ENCODE measurements at regions of chr1 and their contacts with region 1.

Region 1: DNA sequence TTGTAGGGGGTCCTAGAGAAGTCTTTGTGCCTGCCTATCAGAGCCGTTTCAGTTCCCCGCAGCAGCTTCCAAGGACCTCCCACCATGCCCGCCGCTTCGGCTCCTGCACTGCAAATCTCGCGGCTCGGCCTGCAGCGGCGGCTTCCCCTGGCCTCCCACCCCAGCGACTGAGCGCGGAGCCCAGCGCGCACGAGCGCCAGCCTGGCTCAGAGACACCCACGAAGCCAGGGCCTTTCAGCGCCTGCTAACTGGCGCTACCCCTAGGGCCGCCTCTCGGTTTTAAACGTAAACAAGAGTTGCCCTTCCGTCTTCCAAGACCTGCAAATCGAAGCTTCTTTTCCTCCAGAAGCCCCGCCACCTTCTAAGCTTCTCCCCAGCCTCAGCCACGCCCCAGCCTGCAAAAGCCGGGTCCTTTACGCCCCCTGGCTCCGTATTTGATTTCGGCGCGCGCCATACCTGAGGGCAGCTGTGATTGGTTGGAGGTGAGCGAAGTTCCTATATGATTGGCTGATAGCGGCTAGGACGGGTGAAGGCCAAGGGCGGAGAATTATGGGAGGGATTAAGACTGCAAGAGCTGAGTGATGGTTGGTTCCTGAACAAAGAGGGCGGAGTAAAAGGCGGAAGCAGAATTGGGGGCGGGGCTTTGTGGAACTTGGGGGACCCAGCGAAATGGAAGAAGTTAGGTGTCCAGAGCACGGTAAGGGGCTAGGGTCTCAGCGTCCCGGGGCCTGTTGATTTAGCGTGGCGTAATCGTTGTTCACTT is at the start of gene TTF2:
- DNase-seq: peak; percentile 95 to 98 (median 96)
- H3K4me3 ChIP-seq: peak within 1 kb of the TSS; percentile 67 to 85 (median 73)
- H3K4me3 Mint-ChIP-seq: no peak within 1 kb of the TSS
- H3K27ac ChIP-seq: peak within 1 kb of the TSS; percentile 22 to 85
- H3K27ac Mint-ChIP-seq: peak within 1 kb of the TSS in 3 of 7 donors; percentile 63 to 77 (median 75)
- H3K4me1 ChIP-seq: peaks cover 16 to 25% of the 10 kb centered on the region in 2 donors
- H3K4me1 Mint-ChIP-seq: peaks cover 22% of the 10 kb centered on the region
- H3K27me3 ChIP-seq: no peaks in the 10 kb centered on the region
- H3K27me3 Mint-ChIP-seq: no peaks in the 10 kb centered on the region
- CTCF ChIP-seq: no peak
- polyA plus RNA-seq, gene TTF2: 5.6 to 12.9 (median 8.0) TPM

Region 2: GRCh38 chr1:116724765-116725375 is 335.0 kb before region 1 on chr1:
- intact Hi-C with region 1: loop called in 1 of 2 experiments (anchors 5 kb)
- DNase-seq: peak; percentile 25 to 61 (median 54)
- H3K4me3 ChIP-seq: no peak overlapping the region
- H3K4me3 Mint-ChIP-seq: no peak overlapping the region
- H3K27ac ChIP-seq: no peak overlapping the region
- H3K27ac Mint-ChIP-seq: no peak overlapping the region
- H3K4me1 ChIP-seq: peaks cover 15 to 17% of the 10 kb centered on the region in 2 donors
- H3K4me1 Mint-ChIP-seq: peaks cover 15% of the 10 kb centered on the region
- H3K27me3 ChIP-seq: no peaks in the 10 kb centered on the region
- H3K27me3 Mint-ChIP-seq: peaks cover 0 to 8% (median 0%) of the 10 kb centered on the region in 3 donors
- CTCF ChIP-seq: peak; percentile 91

Region 3: GRCh38 chr1:116737020-116737854 is 322.6 kb before region 1 on chr1:
- intact Hi-C with region 1: loop called (anchors 5 kb)
- DNase-seq: peak; percentile 47 to 57 (median 53)
- H3K4me3 ChIP-seq: no peak overlapping the region
- H3K4me3 Mint-ChIP-seq: no peak overlapping the region
- H3K27ac ChIP-seq: no peak overlapping the region
- H3K27ac Mint-ChIP-seq: peak overlapping the region in 1 of 7 donors; percentile 50
- H3K4me1 ChIP-seq: peaks cover 34 to 39% of the 10 kb centered on the region in 2 donors
- H3K4me1 Mint-ChIP-seq: peaks cover 42% of the 10 kb centered on the region
- H3K27me3 ChIP-seq: no peaks in the 10 kb centered on the region
- H3K27me3 Mint-ChIP-seq: peaks cover 0 to 4% (median 1%) of the 10 kb centered on the region in 3 donors
- CTCF ChIP-seq: peak; percentile 83

Region 4: DNA sequence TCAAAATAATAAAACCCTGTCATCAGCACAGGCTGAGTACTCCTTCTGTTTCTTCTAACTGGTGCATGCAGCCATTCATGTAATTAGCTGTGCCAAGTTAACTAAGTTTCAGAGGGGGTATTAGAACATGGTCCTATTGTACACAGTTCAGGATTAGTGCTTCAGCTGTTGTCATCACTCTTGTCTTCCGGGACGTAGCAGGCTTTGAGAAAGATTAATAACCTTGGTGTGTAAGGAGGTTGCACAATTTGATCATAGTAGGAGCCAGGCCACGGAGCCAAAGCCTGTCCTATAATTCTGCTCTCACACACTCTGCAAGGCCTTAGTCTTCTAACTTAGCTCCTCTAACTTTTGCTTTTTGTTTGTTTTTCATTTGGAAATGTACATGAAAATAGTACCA is 105.4 kb before region 1 on chr1:
- intact Hi-C with region 1: no loop called
- DNase-seq: no peak
- H3K4me3 ChIP-seq: no peak overlapping the region
- H3K4me3 Mint-ChIP-seq: no peak overlapping the region
- H3K27ac ChIP-seq: no peak overlapping the region
- H3K27ac Mint-ChIP-seq: no peak overlapping the region
- H3K4me1 ChIP-seq: no peaks in the 10 kb centered on the region
- H3K4me1 Mint-ChIP-seq: peaks cover 2% of the 10 kb centered on the region
- H3K27me3 ChIP-seq: no peaks in the 10 kb centered on the region
- H3K27me3 Mint-ChIP-seq: peaks cover 0 to 2% (median 2%) of the 10 kb centered on the region in 3 donors
- CTCF ChIP-seq: no peak

Region 5: GRCh38 chr1:116990612-116991151 is 69.2 kb before region 1 on chr1:
- intact Hi-C with region 1: loop called in 1 of 2 experiments (anchors 10 kb)
- DNase-seq: peak; percentile 87 to 97 (median 94)
- H3K4me3 ChIP-seq: peak overlapping the region in 1 of 3 experiments; percentile 26
- H3K4me3 Mint-ChIP-seq: peak overlapping the region; percentile 18 to 68
- H3K27ac ChIP-seq: peak overlapping the region; percentile 96 to 97
- H3K27ac Mint-ChIP-seq: peak overlapping the region; percentile 92 to 99 (median 97)
- H3K4me1 ChIP-seq: peaks cover 72 to 75% of the 10 kb centered on the region in 2 donors
- H3K4me1 Mint-ChIP-seq: peaks cover 89% of the 10 kb centered on the region
- H3K27me3 ChIP-seq: no peaks in the 10 kb centered on the region
- H3K27me3 Mint-ChIP-seq: peaks cover 0 to 8% (median 1%) of the 10 kb centered on the region in 3 donors
- CTCF ChIP-seq: no peak

Region 6: GRCh38 chr1:117121776-117122697 is 62.2 kb after region 1 on chr1:
- intact Hi-C with region 1: loop called (anchors 5 kb)
- DNase-seq: peak; percentile 91 to 95 (median 93)
- H3K4me3 ChIP-seq: peak overlapping the region; percentile 44 to 79 (median 66)
- H3K4me3 Mint-ChIP-seq: peak overlapping the region; percentile 85 to 91
- H3K27ac ChIP-seq: peak overlapping the region; percentile 72 to 78
- H3K27ac Mint-ChIP-seq: peak overlapping the region; percentile 79 to 92 (median 90)
- H3K4me1 ChIP-seq: peaks cover 12 to 15% of the 10 kb centered on the region in 2 donors
- H3K4me1 Mint-ChIP-seq: peaks cover 19% of the 10 kb centered on the region
- H3K27me3 ChIP-seq: peaks cover 0 to 8% of the 10 kb centered on the region in 2 donors
- H3K27me3 Mint-ChIP-seq: peaks cover 0 to 15% (median 9%) of the 10 kb centered on the region in 3 donors
- CTCF ChIP-seq: peak; percentile 75

Region 7: GRCh38 chr1:117180147-117180967 is 120.5 kb after region 1 on chr1:
- intact Hi-C with region 1: no loop called
- DNase-seq: no peak
- H3K4me3 ChIP-seq: no peak overlapping the region
- H3K4me3 Mint-ChIP-seq: no peak overlapping the region
- H3K27ac ChIP-seq: no peak overlapping the region
- H3K27ac Mint-ChIP-seq: no peak overlapping the region
- H3K4me1 ChIP-seq: no peaks in the 10 kb centered on the region
- H3K4me1 Mint-ChIP-seq: no peaks in the 10 kb centered on the region
- H3K27me3 ChIP-seq: no peaks in the 10 kb centered on the region
- H3K27me3 Mint-ChIP-seq: no peaks in the 10 kb centered on the region
- CTCF ChIP-seq: no peak

Region 8: DNA sequence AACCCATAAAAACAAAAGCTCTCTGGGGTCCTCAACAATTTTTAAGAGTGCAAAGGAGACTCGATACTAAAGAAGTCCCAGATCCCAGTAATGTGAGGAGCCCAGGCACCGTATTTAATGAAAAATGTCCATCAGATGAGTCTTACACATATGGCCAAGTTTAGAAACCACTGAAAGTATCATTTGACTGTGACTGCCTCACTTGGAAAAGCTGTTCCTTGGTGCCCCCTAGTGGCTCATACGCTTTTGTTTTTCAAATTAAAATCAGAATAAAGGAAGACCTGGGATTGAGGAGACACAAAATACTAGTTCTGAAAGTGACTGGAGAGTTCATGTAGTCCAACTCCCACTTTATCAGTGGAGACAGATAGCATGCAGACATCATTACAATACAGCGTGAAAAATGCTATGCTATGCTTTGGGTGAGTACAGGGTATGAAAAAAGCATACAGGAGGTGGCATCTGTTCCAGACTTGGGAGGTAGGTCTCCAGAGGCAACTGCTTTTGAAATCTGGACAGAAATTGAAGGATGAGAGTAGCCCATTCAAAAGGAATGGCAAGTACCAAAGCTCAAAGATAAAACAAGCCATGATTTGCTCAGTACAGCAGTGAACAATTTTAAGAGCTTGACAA is 835.7 kb after region 1 on chr1:
- intact Hi-C with region 1: loop called in 1 of 2 experiments (anchors 10 kb)
- DNase-seq: peak; percentile 16 to 36 (median 36)
- H3K4me3 ChIP-seq: no peak overlapping the region
- H3K4me3 Mint-ChIP-seq: no peak overlapping the region
- H3K27ac ChIP-seq: no peak overlapping the region
- H3K27ac Mint-ChIP-seq: no peak overlapping the region
- H3K4me1 ChIP-seq: no peaks in the 10 kb centered on the region
- H3K4me1 Mint-ChIP-seq: no peaks in the 10 kb centered on the region
- H3K27me3 ChIP-seq: no peaks in the 10 kb centered on the region
- H3K27me3 Mint-ChIP-seq: no peaks in the 10 kb centered on the region
- CTCF ChIP-seq: peak; percentile 87

Measured in CD14-positive monocyte (primary cell).